ENCODE measurements at regions of chr19 and their contacts with region 1.

Region 1: GRCh38 chr19:35269421-35270117 is 807 bp downstream of the USF2 start:
- DNase-seq: peak; percentile 50 to 79 (median 66)
- ATAC-seq: peak; percentile 69
- H3K4me3 ChIP-seq: peak overlapping the region; percentile 44
- H3K4me3 Mint-ChIP-seq: peak overlapping the region; percentile 64 to 93 (median 75)
- H3K27ac ChIP-seq: peak overlapping the region; percentile 66
- H3K27ac Mint-ChIP-seq: peak overlapping the region; percentile 40 to 90 (median 74)
- H3K4me1 ChIP-seq: peaks cover 6 to 17% of the 10 kb centered on the region in 2 donors
- H3K4me1 Mint-ChIP-seq: peaks cover 28 to 54% (median 45%) of the 10 kb centered on the region in 7 donors
- H3K27me3 ChIP-seq: no peaks in the 10 kb centered on the region
- H3K27me3 Mint-ChIP-seq: no peaks in the 10 kb centered on the region

Region 2: GRCh38 chr19:35066691-35067563 is 202.6 kb before region 1 on chr19:
- CTCF ChIA-PET with region 1: no interaction called
- POLR2A ChIA-PET with region 1: no interaction called
- intact Hi-C with region 1: loop called in 1 of 2 experiments (anchors 2 kb)
- DNase-seq: peak; percentile 74 to 91 (median 87)
- ATAC-seq: peak; percentile 95
- H3K4me3 ChIP-seq: no peak overlapping the region
- H3K4me3 Mint-ChIP-seq: peak overlapping the region in 2 of 10 donors; percentile 3 to 24
- H3K27ac ChIP-seq: no peak overlapping the region
- H3K27ac Mint-ChIP-seq: peak overlapping the region in 6 of 9 donors; percentile 8 to 80 (median 49)
- H3K4me1 ChIP-seq: no peaks in the 10 kb centered on the region
- H3K4me1 Mint-ChIP-seq: peaks cover 0 to 13% (median 7%) of the 10 kb centered on the region in 7 donors
- H3K27me3 ChIP-seq: no peaks in the 10 kb centered on the region
- H3K27me3 Mint-ChIP-seq: no peaks in the 10 kb centered on the region

Region 3: GRCh38 chr19:35193869-35194665 is 75.5 kb before region 1 on chr19:
- CTCF ChIA-PET with region 1: no interaction called
- POLR2A ChIA-PET with region 1: interaction called, 4 read pairs
- intact Hi-C with region 1: loop called in 1 of 2 experiments (anchors 5 kb)
- DNase-seq: no peak
- ATAC-seq: no peak
- H3K4me3 ChIP-seq: no peak overlapping the region
- H3K4me3 Mint-ChIP-seq: no peak overlapping the region
- H3K27ac ChIP-seq: no peak overlapping the region
- H3K27ac Mint-ChIP-seq: peak overlapping the region in 3 of 9 donors; percentile 43 to 64 (median 44)
- H3K4me1 ChIP-seq: no peaks in the 10 kb centered on the region
- H3K4me1 Mint-ChIP-seq: peaks cover 9 to 26% (median 19%) of the 10 kb centered on the region in 7 donors
- H3K27me3 ChIP-seq: no peaks in the 10 kb centered on the region
- H3K27me3 Mint-ChIP-seq: peaks cover 0 to 23% (median 0%) of the 10 kb centered on the region in 5 donors

Region 4: GRCh38 chr19:35236638-35237400 is 32.8 kb before region 1 on chr19:
- CTCF ChIA-PET with region 1: interaction called, 3 read pairs
- POLR2A ChIA-PET with region 1: interaction called, 15 read pairs
- intact Hi-C with region 1: no loop called
- DNase-seq: peak in 3 of 9 donors; percentile 15 to 35 (median 23)
- ATAC-seq: no peak
- H3K4me3 ChIP-seq: no peak overlapping the region
- H3K4me3 Mint-ChIP-seq: no peak overlapping the region
- H3K27ac ChIP-seq: no peak overlapping the region
- H3K27ac Mint-ChIP-seq: peak overlapping the region in 6 of 9 donors; percentile 11 to 62 (median 26)
- H3K4me1 ChIP-seq: peaks cover 13 to 17% of the 10 kb centered on the region in 2 donors
- H3K4me1 Mint-ChIP-seq: peaks cover 13 to 45% (median 35%) of the 10 kb centered on the region in 7 donors
- H3K27me3 ChIP-seq: no peaks in the 10 kb centered on the region
- H3K27me3 Mint-ChIP-seq: peaks cover 0 to 20% (median 0%) of the 10 kb centered on the region in 5 donors

Region 5: DNA sequence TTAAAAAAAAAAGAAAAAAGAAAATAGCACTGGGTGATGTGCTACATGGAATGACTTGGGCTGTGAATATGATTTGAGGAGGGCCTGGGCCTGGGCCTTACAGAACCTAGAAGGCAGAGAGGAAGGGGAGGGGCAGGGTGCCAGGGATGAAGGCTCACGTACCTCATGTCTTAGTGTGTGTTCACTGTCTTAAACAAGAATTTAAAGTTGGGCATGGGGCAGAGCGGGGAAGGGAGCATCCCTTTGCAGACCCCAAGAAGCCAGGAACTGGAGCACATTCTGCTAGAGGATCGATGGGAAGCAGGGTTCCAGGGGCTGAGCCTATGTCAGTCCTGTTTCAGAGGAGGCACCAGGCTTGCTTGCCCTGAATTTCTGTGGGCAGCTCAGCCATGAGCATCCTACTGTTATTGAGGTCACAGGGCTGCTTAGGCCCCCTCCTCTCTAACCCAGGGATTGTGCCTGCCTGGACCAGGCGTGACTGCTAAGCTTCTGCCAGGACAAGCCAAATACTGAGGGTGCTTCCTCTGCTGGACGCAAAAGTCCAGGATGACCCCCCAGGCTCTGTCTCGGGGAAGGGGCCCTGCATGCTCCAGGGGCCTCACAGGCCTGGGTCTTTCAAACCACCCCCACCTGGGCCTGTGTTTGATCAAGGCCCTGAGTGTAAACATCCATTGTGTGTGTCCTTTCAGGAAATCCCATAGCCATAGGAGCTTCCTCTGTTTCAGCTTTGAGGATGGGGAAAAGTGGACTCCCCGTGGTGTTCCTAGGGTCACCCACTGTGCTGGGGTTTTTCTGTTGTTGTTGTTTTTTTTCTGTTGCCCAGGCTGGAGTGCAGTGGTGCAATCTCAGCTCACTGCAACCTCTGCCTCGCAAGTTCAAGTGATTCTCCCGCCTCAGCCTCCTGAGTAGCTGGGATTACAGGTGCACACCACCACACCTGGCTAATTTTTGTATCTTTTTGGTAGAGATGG is 16.0 kb before region 1 on chr19:
- CTCF ChIA-PET with region 1: interaction called, 6 read pairs
- POLR2A ChIA-PET with region 1: interaction called, 40 read pairs
- intact Hi-C with region 1: loop called in 1 of 2 experiments (anchors 1 kb)
- DNase-seq: no peak
- ATAC-seq: no peak
- H3K4me3 ChIP-seq: no peak overlapping the region
- H3K4me3 Mint-ChIP-seq: no peak overlapping the region
- H3K27ac ChIP-seq: no peak overlapping the region
- H3K27ac Mint-ChIP-seq: peak overlapping the region in 3 of 9 donors; percentile 9 to 81 (median 24)
- H3K4me1 ChIP-seq: peaks cover 0 to 12% of the 10 kb centered on the region in 2 donors
- H3K4me1 Mint-ChIP-seq: peaks cover 21 to 55% (median 47%) of the 10 kb centered on the region in 7 donors
- H3K27me3 ChIP-seq: no peaks in the 10 kb centered on the region
- H3K27me3 Mint-ChIP-seq: peaks cover 0 to 20% (median 0%) of the 10 kb centered on the region in 5 donors

Region 6: DNA sequence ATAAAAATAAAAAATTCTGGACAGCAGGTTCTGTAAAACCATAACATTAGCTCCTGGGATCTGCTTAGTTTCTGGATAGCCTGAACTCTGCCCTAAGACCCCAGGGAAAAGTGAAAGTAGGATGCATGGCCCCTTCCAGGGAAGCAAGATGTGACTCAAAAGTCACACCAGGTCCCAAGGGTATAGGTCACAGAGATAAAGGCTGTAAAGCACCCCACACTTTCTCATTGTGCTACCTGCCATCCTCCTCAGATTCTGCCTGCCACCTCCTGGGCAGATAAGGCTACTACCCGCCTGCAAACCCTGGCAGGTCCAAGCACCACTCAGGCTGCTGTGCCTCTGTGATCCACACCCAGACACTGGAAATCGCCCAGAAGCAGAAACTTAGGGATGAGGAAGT is 199.1 kb after region 1 on chr19:
- CTCF ChIA-PET with region 1: no interaction called
- POLR2A ChIA-PET with region 1: interaction called, 3 read pairs
- intact Hi-C with region 1: loop called (anchors 1 to 10 kb)
- DNase-seq: peak; percentile 30 to 66 (median 57)
- ATAC-seq: peak; percentile 99
- H3K4me3 ChIP-seq: no peak overlapping the region
- H3K4me3 Mint-ChIP-seq: no peak overlapping the region
- H3K27ac ChIP-seq: no peak overlapping the region
- H3K27ac Mint-ChIP-seq: no peak overlapping the region
- H3K4me1 ChIP-seq: peaks cover 0 to 10% of the 10 kb centered on the region in 2 donors
- H3K4me1 Mint-ChIP-seq: peaks cover 4 to 9% (median 7%) of the 10 kb centered on the region in 7 donors
- H3K27me3 ChIP-seq: no peaks in the 10 kb centered on the region
- H3K27me3 Mint-ChIP-seq: peaks cover 0 to 8% (median 0%) of the 10 kb centered on the region in 5 donors

Region 7: GRCh38 chr19:35648017-35648961 is 378.7 kb after region 1 on chr19 and contains the start of gene COX6B1:
- CTCF ChIA-PET with region 1: no interaction called
- POLR2A ChIA-PET with region 1: no interaction called
- intact Hi-C with region 1: loop called in 1 of 2 experiments (anchors 10 kb)
- DNase-seq: peak; percentile 63 to 95 (median 91)
- ATAC-seq: peak; percentile 80
- H3K4me3 ChIP-seq: peak within 1 kb of the TSS; percentile 95
- H3K4me3 Mint-ChIP-seq: peak within 1 kb of the TSS; percentile 88 to 99 (median 97)
- H3K27ac ChIP-seq: peak within 1 kb of the TSS; percentile 89
- H3K27ac Mint-ChIP-seq: peak within 1 kb of the TSS; percentile 89 to 98 (median 95)
- H3K4me1 ChIP-seq: peaks cover 7 to 25% of the 10 kb centered on the region in 2 donors
- H3K4me1 Mint-ChIP-seq: peaks cover 17 to 67% (median 42%) of the 10 kb centered on the region in 7 donors
- H3K27me3 ChIP-seq: no peaks in the 10 kb centered on the region
- H3K27me3 Mint-ChIP-seq: no peaks in the 10 kb centered on the region
- total RNA-seq, gene COX6B1: 172 to 464 (median 232) TPM

Measured in naive thymus-derived CD4-positive, alpha-beta T cell (primary cell).